Upper lobe of right lung (tissue), 1 donor: ENCODE measurements at regions of chr10 and their contacts with region 1.

Region 1: GRCh38 chr10:110746254-110746826 is 102.2 kb downstream of the RBM20 start:
- DNase-seq: no peak
- ATAC-seq: peak; percentile 93
- H3K4me3 ChIP-seq: no peak overlapping the region
- H3K27ac ChIP-seq: no peak overlapping the region
- H3K4me1 ChIP-seq: no peaks in the 10 kb centered on the region
- H3K27me3 ChIP-seq: no peaks in the 10 kb centered on the region
- CTCF ChIP-seq: peak; percentile 80

Region 2: GRCh38 chr10:110706690-110707098 is 39.6 kb before region 1 on chr10:
- intact Hi-C with region 1: no loop called
- DNase-seq: no peak
- ATAC-seq: no peak
- H3K4me3 ChIP-seq: no peak overlapping the region
- H3K27ac ChIP-seq: no peak overlapping the region
- H3K4me1 ChIP-seq: no peaks in the 10 kb centered on the region
- H3K27me3 ChIP-seq: no peaks in the 10 kb centered on the region
- CTCF ChIP-seq: no peak

Region 3: DNA sequence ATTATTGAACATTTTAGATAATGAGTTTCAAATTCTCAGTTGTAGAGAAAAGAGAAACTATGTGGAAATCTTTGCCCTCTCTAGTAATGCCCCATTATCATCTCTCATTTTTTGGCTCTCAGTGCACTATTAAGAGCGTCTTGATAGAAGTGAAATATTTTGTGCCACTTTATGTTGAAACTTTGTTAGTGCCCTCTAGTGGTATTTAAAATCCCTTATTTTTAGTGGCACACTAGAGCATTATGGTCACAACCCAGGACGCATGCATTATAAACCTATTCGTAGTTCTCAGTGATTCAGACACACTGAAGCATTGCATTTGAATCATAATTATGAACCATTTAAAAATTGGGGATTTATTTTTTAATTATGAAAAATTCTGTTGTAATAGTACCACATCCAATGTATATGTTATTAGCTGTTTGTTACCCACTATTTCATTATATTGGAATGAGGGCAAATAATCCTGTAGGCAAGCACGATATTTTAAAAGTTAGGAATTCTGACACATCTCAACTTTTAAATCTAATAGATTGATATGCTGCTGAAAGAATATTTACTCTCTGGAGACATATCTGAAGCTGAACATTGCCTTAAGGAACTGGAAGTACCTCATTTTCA is 147.3 kb after region 1 on chr10:
- intact Hi-C with region 1: loop called (anchors 10 kb)
- DNase-seq: no peak
- ATAC-seq: peak; percentile 84
- H3K4me3 ChIP-seq: no peak overlapping the region
- H3K27ac ChIP-seq: no peak overlapping the region
- H3K4me1 ChIP-seq: no peaks in the 10 kb centered on the region
- H3K27me3 ChIP-seq: no peaks in the 10 kb centered on the region
- CTCF ChIP-seq: peak; percentile 60